ENCODE measurements at regions of chr22 and their contacts with region 1.

Region 1: DNA sequence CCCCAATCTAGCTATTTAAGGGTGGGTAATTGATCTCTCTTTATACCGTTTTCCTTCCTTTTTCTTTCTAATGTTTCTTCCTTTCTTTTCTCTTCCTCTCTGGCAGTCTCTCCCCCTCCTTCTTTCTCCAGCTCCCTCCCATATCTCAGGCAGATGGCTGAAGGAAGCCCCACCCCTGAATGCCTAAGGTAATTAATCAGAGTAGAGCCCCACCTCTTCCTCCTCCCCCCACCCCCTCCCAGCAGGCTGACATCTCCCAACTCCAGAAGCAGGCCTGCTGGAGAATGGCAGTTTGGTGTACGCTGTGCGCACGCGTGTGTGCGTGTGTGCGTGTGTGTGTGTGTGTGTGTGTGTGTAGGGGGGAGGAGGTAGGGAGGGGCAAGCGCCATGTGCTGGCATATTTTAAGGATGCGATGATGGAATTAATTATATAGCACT is 122.6 kb downstream of the APOL5 start:
- DNase-seq: peak; percentile 90

Region 2: DNA sequence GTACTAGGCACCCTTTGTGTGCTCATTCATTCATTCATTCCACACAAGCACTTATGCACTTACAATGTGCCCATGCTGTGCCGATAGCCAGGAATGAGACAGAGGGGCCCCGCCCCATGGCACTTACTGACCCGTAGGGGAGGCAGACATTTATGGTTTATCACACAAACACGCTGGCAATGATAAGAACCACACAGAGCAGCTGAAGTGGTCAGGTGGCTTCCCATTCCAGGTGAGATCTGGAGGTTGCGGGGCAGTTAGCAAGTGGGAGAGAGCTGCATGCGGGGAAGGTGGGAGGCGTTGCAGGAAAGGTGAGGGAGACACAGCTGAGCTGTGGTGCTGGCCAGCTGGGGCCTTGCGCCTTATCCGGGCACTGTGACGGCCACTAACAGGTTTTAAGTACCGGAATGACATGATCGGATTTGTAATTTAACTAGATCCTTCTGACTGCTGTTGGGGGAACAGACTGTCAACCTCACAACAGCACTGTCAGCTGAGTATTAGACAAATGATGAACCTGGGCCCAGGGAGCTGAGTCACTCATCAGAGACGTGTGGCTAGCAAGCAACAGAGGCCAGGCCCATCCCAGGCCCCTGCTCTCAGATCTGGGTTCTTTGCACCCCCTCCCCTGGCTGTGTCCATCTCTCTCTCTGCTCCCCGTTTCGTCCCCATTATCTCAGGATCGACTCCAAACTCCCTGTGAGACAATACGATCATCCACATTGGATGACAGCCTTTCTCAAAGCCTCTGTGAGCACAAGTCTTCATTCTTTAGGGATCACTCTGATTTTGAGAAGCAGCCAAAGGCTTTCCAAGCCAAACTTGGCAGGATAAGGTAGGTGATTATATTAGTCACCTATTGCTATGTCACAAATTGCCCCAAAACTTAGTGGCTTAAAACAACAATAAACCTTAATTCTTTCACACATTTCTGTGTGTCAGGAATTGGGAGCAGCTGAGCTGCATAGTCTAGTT is 271.3 kb before region 1 on chr22:
- intact Hi-C with region 1: no loop called
- DNase-seq: no peak

Region 3: DNA sequence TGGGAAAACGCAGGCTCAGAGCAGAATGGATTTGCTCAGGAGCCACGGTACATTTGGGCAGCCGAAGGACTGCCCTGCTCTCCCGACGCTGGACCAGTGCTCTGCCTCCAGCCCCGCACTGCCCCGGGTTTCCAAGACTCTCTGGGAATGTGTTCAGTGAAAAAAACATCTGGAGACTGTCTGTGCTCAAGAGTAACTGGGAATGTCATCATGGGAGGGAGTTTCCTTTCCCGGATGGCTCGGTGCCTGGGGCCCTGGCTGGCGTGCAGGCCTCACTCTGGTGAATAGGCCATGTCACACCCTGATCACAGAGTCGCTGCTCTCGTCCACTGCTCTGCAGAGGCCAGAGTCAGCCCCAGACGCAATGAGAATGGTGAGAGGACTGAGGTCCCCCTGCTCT is 201.9 kb before region 1 on chr22:
- intact Hi-C with region 1: loop called (anchors 2 kb)
- DNase-seq: peak; percentile 91

Region 4: DNA sequence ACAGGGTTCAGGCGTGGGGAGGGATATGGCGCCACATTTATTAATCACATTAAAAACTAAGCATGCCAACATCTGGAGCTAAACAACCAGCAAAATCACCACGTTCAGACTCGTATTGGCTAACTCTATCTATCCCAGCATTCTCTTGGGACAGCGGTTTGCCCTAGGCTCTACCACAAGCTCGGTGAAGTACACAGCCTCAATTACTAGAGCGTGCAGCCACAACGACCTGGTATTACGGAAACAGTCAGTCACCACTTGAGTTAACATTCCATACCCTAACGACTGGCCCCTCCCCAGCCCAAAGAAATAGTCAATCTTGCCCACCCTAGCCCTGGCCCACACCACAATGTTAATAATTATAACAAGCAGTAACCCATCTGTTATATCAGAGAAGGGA is 90.5 kb before region 1 on chr22:
- intact Hi-C with region 1: loop called (anchors 5 kb)
- DNase-seq: no peak

Region 5: GRCh38 chr22:35830305-35830704 is 10.0 kb before region 1 on chr22:
- intact Hi-C with region 1: no loop called
- DNase-seq: no peak

Region 6: GRCh38 chr22:35894937-35895708 is 54.8 kb after region 1 on chr22:
- intact Hi-C with region 1: loop called (anchors 5 kb)
- DNase-seq: no peak

Region 7: DNA sequence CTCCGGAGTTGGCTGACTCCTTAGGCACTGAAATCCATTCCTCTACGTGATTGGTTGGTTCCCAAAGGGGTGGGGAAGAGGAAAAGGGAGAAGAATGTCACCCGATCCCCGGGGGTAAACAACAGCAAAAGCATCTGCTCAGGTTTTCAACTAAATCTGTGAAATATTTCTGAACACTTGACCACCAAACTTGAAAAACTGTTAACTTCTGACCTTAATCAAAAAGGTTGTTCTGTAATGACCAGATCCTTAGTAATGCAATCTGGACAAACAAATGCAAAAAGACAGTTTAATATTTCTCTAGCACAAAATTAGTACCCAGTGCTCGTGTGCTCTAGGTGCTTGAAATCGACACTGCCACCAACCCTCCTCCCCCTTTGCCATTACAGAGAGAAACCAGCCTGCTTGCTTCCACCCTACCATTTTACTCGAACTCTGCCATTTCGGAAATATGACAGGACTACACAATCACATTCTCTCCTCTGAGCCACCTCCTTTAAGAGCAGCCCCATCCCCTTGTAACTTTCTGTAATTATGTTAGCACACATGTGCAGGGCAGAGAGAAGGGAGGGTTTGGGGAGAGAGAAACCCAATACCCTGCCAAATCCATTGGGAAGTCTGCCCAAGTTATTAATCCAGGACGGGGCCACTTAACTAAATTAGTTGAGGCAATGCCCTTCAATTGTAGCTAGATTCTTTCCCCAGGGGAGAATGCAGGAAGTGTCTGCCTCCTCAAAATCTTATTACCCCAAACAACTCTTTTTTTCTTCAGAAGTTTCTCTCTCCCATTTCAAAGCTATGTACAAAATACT is 74.5 kb after region 1 on chr22:
- intact Hi-C with region 1: loop called (anchors 5 kb)
- DNase-seq: no peak